ENCODE measurements at regions of chr9 and their contacts with region 1.

Region 1: DNA sequence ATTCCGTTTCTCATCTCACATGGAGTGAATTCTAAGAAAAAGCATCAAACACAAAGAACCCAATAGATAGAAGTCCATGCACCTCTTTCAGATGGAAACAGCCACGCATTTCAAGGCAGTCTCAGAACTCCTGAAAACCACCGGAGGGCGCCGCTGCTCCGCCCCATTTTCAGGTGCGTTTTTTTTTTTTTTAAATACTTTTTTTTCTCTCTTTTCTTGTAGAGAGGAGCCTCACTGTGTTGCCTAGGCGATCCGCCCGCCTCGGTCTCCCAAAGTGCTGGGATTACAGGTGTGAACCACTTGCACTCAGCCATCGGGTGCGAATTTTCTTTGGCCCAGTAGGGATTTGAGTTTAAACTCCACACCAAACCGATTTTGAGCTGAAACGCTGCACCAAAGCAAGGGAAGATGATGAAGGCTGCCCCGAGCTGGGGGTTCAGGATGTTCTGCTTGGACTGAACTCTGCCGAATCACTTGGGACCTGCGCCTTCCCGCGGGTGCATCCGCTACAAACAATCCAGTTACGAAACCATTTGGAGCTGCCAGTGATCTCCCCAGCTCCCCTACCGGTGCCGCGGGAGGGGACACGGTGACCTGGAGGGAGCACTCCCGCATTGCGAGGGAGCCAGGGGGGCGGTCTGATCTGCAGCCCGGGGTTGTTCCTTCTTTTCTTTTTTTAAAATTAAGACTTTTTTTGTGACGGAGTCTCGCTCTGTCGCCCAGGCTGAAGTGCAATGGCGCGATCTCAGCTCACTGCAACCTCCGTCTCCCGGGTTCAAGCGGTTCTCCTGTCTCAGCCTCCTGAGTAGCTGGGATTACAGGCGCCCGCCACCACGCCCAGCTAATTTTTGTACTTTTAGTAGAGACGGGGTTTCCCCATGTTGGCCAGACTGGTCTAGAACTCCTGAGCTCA is 1.4 kb downstream of the PTGR1 start:
- DNase-seq: peak; percentile 72 to 87
- ATAC-seq: peak; percentile 43 to 79 (median 64)
- H3K4me3 ChIP-seq: peak overlapping the region; percentile 85
- H3K27ac ChIP-seq: peak overlapping the region; percentile 74
- H3K4me1 ChIP-seq: peaks cover 3% of the 10 kb centered on the region
- H3K27me3 ChIP-seq: no peaks in the 10 kb centered on the region
- CTCF ChIP-seq: peak; percentile 66

Region 2: DNA sequence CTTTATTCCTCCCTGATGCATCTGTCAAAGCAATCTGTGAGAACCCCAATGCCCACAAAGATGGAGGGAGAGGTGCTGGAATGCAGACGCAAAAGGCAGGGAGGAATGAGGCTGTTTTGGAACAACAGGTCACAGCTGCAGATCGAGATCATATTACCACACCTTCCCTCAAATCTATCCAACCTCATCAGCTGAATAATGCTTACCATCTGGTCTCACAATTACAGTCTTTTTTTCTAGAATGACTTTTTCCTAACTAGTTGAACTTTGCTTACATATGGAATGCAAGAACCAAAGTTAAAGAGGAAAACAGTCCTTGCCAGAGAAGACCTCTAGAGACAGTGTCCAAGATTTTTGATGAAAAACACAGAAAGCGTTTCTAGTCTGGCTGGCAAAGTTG is 717.9 kb before region 1 on chr9:
- intact Hi-C with region 1: loop called in 1 of 2 experiments (anchors 5 kb)
- DNase-seq: no peak
- ATAC-seq: no peak
- H3K4me3 ChIP-seq: no peak overlapping the region
- H3K27ac ChIP-seq: no peak overlapping the region
- H3K4me1 ChIP-seq: no peaks in the 10 kb centered on the region
- H3K27me3 ChIP-seq: no peaks in the 10 kb centered on the region
- CTCF ChIP-seq: no peak

Region 3: GRCh38 chr9:111631071-111631971 is 33.2 kb after region 1 on chr9 and contains the start of gene DNAJC25:
- intact Hi-C with region 1: loop called in 1 of 2 experiments (anchors 5 kb)
- DNase-seq: peak; percentile 96 to 98
- ATAC-seq: peak; percentile 99 to 100 (median 100)
- H3K4me3 ChIP-seq: peak within 1 kb of the TSS; percentile 82
- H3K27ac ChIP-seq: peak within 1 kb of the TSS; percentile 89
- H3K4me1 ChIP-seq: peaks cover 21% of the 10 kb centered on the region
- H3K27me3 ChIP-seq: no peaks in the 10 kb centered on the region
- CTCF ChIP-seq: no peak
- total RNA-seq, gene DNAJC25: 1.9 to 5.6 (median 4.5) TPM

Region 4: GRCh38 chr9:111691672-111692329 is 93.7 kb after region 1 on chr9:
- intact Hi-C with region 1: loop called in 1 of 2 experiments (anchors 5 kb)
- DNase-seq: no peak
- ATAC-seq: no peak
- H3K4me3 ChIP-seq: no peak overlapping the region
- H3K27ac ChIP-seq: no peak overlapping the region
- H3K4me1 ChIP-seq: no peaks in the 10 kb centered on the region
- H3K27me3 ChIP-seq: no peaks in the 10 kb centered on the region
- CTCF ChIP-seq: peak; percentile 21

Region 5: DNA sequence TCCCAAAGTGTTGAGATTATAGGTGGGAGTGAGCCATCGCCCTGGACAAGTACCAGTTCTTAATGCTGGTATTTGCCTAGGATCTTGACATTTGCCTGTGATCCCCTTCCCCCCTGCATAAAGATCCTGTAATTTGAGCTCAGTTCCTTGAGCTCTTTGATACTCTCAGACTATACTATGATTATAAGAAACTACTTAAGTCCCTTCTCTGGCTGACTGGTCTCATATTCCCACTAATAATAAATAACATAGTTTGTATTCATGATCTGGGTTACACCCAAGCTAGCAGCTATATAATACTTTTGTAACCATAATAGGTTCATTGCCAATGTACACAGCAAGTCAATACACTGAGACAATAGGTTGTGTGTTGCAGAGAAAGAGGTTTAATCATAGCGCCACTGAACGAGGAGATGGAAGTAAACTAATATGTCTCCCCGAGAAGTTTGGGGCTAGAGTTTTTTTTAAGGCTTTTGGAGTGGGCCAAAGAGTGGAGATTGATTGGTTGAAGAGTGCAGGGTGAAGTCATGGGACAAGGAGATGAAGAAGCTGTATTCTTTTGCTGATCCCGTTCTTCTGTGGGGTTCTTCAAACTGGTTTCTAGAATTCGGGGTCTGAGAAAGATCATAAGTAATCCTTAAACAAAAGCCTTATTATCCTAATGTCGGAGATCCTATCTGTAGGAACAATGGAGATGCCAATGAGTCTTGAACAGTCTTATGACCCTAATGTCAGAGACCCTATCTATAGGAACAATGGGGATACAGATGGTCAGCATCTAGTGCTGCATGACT is 217.4 kb after region 1 on chr9:
- intact Hi-C with region 1: no loop called
- DNase-seq: no peak
- ATAC-seq: no peak
- H3K4me3 ChIP-seq: no peak overlapping the region
- H3K27ac ChIP-seq: no peak overlapping the region
- H3K4me1 ChIP-seq: no peaks in the 10 kb centered on the region
- H3K27me3 ChIP-seq: no peaks in the 10 kb centered on the region
- CTCF ChIP-seq: no peak

Measured in psoas muscle (tissue), 8 donors.